ENCODE measurements at regions of chr17 and their contacts with region 1.

Region 1: GRCh38 chr17:67441052-67441927 is 64.2 kb downstream of the PITPNC1 start:
- DNase-seq: peak; percentile 61 to 95 (median 79)
- ATAC-seq: peak; percentile 82
- H3K4me3 ChIP-seq: peak overlapping the region; percentile 38 to 47
- H3K4me3 Mint-ChIP-seq: peak overlapping the region; percentile 71
- H3K27ac ChIP-seq: peak overlapping the region; percentile 84 to 98
- H3K27ac Mint-ChIP-seq: peak overlapping the region; percentile 95
- H3K4me1 ChIP-seq: peaks cover 86% of the 10 kb centered on the region
- H3K4me1 Mint-ChIP-seq: peaks cover 83% of the 10 kb centered on the region
- H3K27me3 ChIP-seq: no peaks in the 10 kb centered on the region
- H3K27me3 Mint-ChIP-seq: no peaks in the 10 kb centered on the region
- CTCF ChIP-seq: no peak

Region 2: GRCh38 chr17:67390646-67391384 is 50.5 kb before region 1 on chr17:
- CTCF ChIA-PET with region 1: interaction called, 10 read pairs
- POLR2A ChIA-PET with region 1: interaction called, 6 read pairs
- intact Hi-C with region 1: no loop called
- DNase-seq: peak; percentile 21 to 84 (median 67)
- ATAC-seq: peak; percentile 74
- H3K4me3 ChIP-seq: peak overlapping the region; percentile 7 to 30
- H3K4me3 Mint-ChIP-seq: peak overlapping the region; percentile 59
- H3K27ac ChIP-seq: peak overlapping the region; percentile 62 to 74
- H3K27ac Mint-ChIP-seq: peak overlapping the region; percentile 91
- H3K4me1 ChIP-seq: peaks cover 67% of the 10 kb centered on the region
- H3K4me1 Mint-ChIP-seq: peaks cover 86% of the 10 kb centered on the region
- H3K27me3 ChIP-seq: no peaks in the 10 kb centered on the region
- H3K27me3 Mint-ChIP-seq: no peaks in the 10 kb centered on the region
- CTCF ChIP-seq: no peak

Region 3: DNA sequence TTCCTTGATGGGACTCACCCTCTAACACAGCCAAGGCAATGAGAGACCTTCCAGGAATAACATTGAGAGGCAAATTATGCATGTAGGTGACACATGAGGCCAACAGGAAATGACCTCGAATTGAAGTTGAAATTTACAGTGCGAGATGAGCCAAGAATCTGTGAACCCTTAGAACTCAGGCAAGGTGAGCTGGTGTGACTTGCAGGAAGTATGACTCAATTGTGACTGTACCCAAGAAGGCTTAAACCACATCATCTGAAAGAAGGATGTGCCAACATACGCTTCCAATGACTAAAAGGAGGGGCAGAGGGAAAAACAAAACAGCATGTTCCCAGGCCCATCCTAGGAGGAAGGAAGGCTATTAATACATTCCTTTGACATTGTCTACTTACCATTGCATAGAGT is 19.4 kb before region 1 on chr17:
- CTCF ChIA-PET with region 1: interaction called, 8 read pairs
- POLR2A ChIA-PET with region 1: interaction called, 23 read pairs
- intact Hi-C with region 1: loop called in 1 of 2 experiments (anchors 2 kb)
- DNase-seq: peak in 7 of 9 experiments; percentile 53 to 95 (median 69)
- ATAC-seq: peak; percentile 87
- H3K4me3 ChIP-seq: no peak overlapping the region
- H3K4me3 Mint-ChIP-seq: peak overlapping the region; percentile 35
- H3K27ac ChIP-seq: peak overlapping the region; percentile 50 to 96
- H3K27ac Mint-ChIP-seq: peak overlapping the region; percentile 96
- H3K4me1 ChIP-seq: peaks cover 70% of the 10 kb centered on the region
- H3K4me1 Mint-ChIP-seq: peaks cover 90% of the 10 kb centered on the region
- H3K27me3 ChIP-seq: no peaks in the 10 kb centered on the region
- H3K27me3 Mint-ChIP-seq: no peaks in the 10 kb centered on the region
- CTCF ChIP-seq: no peak

Region 4: GRCh38 chr17:67459870-67460455 is 18.7 kb after region 1 on chr17:
- CTCF ChIA-PET with region 1: interaction called, 5 read pairs
- POLR2A ChIA-PET with region 1: interaction called, 20 read pairs
- intact Hi-C with region 1: no loop called
- DNase-seq: peak in 1 of 9 experiments; percentile 39
- ATAC-seq: no peak
- H3K4me3 ChIP-seq: no peak overlapping the region
- H3K4me3 Mint-ChIP-seq: no peak overlapping the region
- H3K27ac ChIP-seq: peak overlapping the region in 1 of 2 experiments; percentile 20
- H3K27ac Mint-ChIP-seq: peak overlapping the region; percentile 80
- H3K4me1 ChIP-seq: peaks cover 60% of the 10 kb centered on the region
- H3K4me1 Mint-ChIP-seq: peaks cover 79% of the 10 kb centered on the region
- H3K27me3 ChIP-seq: no peaks in the 10 kb centered on the region
- H3K27me3 Mint-ChIP-seq: no peaks in the 10 kb centered on the region
- CTCF ChIP-seq: no peak

Region 5: GRCh38 chr17:67491009-67491680 is 49.9 kb after region 1 on chr17:
- CTCF ChIA-PET with region 1: no interaction called
- POLR2A ChIA-PET with region 1: interaction called, 11 read pairs
- intact Hi-C with region 1: no loop called
- DNase-seq: peak in 3 of 9 experiments; percentile 40 to 63 (median 42)
- ATAC-seq: no peak
- H3K4me3 ChIP-seq: no peak overlapping the region
- H3K4me3 Mint-ChIP-seq: peak overlapping the region; percentile 49
- H3K27ac ChIP-seq: peak overlapping the region in 1 of 2 experiments; percentile 32
- H3K27ac Mint-ChIP-seq: peak overlapping the region; percentile 76
- H3K4me1 ChIP-seq: peaks cover 46% of the 10 kb centered on the region
- H3K4me1 Mint-ChIP-seq: peaks cover 86% of the 10 kb centered on the region
- H3K27me3 ChIP-seq: no peaks in the 10 kb centered on the region
- H3K27me3 Mint-ChIP-seq: no peaks in the 10 kb centered on the region
- CTCF ChIP-seq: no peak

Region 6: GRCh38 chr17:68832109-68832802 is 1391.0 kb after region 1 on chr17:
- CTCF ChIA-PET with region 1: no interaction called
- POLR2A ChIA-PET with region 1: no interaction called
- intact Hi-C with region 1: no loop called
- DNase-seq: no peak
- ATAC-seq: no peak
- H3K4me3 ChIP-seq: no peak overlapping the region
- H3K4me3 Mint-ChIP-seq: no peak overlapping the region
- H3K27ac ChIP-seq: no peak overlapping the region
- H3K27ac Mint-ChIP-seq: no peak overlapping the region
- H3K4me1 ChIP-seq: no peaks in the 10 kb centered on the region
- H3K4me1 Mint-ChIP-seq: no peaks in the 10 kb centered on the region
- H3K27me3 ChIP-seq: no peaks in the 10 kb centered on the region
- H3K27me3 Mint-ChIP-seq: peaks cover 13% of the 10 kb centered on the region
- CTCF ChIP-seq: no peak